Activated CD4-positive, alpha-beta memory T cell treated with anti-CD3 and anti-CD28 coated beads, Interleukin-2, amount 10 ng/mL, durations not matched to agents 7 days and 5 days (primary cell): ENCODE measurements at regions of chr17 and their contacts with region 1.

Region 1: DNA sequence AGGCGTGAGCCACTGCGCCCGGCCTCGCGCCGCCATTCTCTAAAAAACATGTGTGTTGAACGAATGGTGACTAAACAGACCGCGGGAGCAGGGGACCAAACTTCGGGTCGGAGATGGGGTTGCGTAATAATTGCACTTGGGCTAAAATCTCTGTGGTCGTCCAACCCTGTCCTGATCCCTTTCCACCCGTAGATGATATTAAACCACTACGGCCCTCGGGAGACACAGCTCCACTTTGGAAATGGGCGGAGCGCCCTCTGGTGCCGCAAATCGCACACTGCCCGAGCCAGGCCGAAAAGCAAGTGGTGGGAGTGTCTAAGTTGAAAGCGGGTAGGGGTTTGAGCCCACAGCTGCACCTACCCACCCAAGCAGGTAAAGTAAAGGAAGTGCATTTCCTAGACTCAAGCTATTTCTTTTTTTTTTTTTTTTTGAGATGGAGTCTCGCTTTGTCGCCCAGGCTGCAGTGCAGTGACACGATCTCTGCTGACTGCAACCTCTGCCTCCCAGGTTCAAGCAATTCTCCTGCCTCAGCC is 17.0 kb downstream of the CAVIN1 start:
- DNase-seq: peak; percentile 82
- H3K4me3 Mint-ChIP-seq: no peak overlapping the region
- H3K27ac Mint-ChIP-seq: no peak overlapping the region
- H3K4me1 Mint-ChIP-seq: peaks cover 10% of the 10 kb centered on the region
- H3K27me3 Mint-ChIP-seq: peaks cover 23% of the 10 kb centered on the region

Region 2: DNA sequence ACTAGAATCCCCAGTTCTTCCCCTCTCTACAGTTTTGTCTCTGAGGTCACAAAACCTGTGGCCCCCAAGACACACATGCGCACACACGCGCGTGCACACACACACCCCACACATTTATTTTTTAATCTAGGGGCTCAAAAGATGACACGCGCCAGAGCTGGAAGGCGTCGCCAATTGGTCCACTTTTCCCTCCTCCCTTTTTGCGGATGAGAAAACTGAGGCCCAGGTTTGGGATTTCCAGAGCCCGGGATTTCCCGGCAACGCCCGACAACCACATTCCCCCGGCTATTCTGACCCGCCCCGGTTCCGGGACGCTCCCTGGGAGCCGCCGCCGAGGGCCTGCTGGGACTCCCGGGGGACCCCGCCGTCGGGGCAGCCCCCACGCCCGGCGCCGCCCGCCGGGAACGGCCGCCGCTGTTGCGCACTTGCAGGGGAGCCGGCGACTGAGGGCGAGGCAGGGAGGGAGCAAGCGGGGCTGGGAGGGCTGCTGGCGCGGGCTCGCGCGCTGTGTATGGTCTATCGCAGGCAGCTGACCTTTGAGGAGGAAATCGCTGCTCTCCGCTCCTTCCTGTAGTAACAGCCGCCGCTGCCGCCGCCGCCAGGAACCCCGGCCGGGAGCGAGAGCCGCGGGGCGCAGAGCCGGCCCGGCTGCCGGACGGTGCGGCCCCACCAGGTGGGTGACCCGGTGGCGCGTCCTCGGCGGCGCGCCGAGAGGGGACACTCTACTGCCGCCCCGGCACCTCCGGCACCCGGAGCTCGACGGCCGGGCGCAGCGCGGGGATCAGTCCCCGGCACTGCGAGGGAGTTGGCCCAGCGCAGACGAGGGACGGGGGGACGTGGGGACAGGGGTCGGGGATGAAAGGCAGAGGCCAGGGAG is 117.9 kb before region 1 on chr17 and contains the start of gene STAT5A:
- CTCF ChIA-PET with region 1: no interaction called
- POLR2A ChIA-PET with region 1: no interaction called
- DNase-seq: peak; percentile 86
- H3K4me3 Mint-ChIP-seq: peak within 1 kb of the TSS; percentile 89
- H3K27ac Mint-ChIP-seq: peak within 1 kb of the TSS; percentile 86
- H3K4me1 Mint-ChIP-seq: peaks cover 59% of the 10 kb centered on the region
- H3K27me3 Mint-ChIP-seq: no peaks in the 10 kb centered on the region
- total RNA-seq, gene STAT5A: 88.4 to 96.7 TPM

Region 3: GRCh38 chr17:42312285-42313130 is 93.5 kb before region 1 on chr17:
- CTCF ChIA-PET with region 1: interaction called, 342 read pairs
- POLR2A ChIA-PET with region 1: interaction called, 13 read pairs
- DNase-seq: peak; percentile 80
- H3K4me3 Mint-ChIP-seq: no peak overlapping the region
- H3K27ac Mint-ChIP-seq: peak overlapping the region; percentile 6
- H3K4me1 Mint-ChIP-seq: peaks cover 59% of the 10 kb centered on the region
- H3K27me3 Mint-ChIP-seq: no peaks in the 10 kb centered on the region

Region 4: GRCh38 chr17:42322382-42323267 is 83.4 kb before region 1 on chr17:
- CTCF ChIA-PET with region 1: interaction called, 342 read pairs
- POLR2A ChIA-PET with region 1: interaction called, 18 read pairs
- DNase-seq: peak; percentile 95
- H3K4me3 Mint-ChIP-seq: no peak overlapping the region
- H3K27ac Mint-ChIP-seq: no peak overlapping the region
- H3K4me1 Mint-ChIP-seq: peaks cover 50% of the 10 kb centered on the region
- H3K27me3 Mint-ChIP-seq: no peaks in the 10 kb centered on the region

Region 5: DNA sequence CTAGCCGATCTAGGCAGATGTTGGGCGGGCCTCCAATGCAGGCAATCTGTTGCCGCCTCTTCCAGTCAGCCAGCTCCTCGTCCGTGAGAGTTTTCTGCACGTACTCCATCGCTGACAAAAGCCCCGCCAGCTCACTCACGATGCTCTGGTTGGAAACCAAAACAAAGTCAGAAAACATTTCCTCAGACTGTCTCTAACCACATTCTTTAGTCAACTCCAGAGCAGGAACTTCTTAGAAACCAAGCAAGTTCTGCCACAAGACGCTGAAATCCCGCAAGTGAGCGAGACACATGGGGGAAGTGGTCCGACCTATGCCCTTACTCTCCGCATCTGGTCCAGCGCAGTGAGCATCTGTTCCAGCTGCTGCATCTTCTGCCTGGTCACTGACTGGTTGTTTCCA is 68.6 kb before region 1 on chr17:
- CTCF ChIA-PET with region 1: interaction called, 12 read pairs
- POLR2A ChIA-PET with region 1: interaction called, 3 read pairs
- DNase-seq: peak; percentile 86
- H3K4me3 Mint-ChIP-seq: peak overlapping the region; percentile 34
- H3K27ac Mint-ChIP-seq: peak overlapping the region; percentile 73
- H3K4me1 Mint-ChIP-seq: peaks cover 67% of the 10 kb centered on the region
- H3K27me3 Mint-ChIP-seq: no peaks in the 10 kb centered on the region